Heart left ventricle (tissue), 16 donors: ENCODE measurements at regions of chr5 and their contacts with region 1.

Region 1: DNA sequence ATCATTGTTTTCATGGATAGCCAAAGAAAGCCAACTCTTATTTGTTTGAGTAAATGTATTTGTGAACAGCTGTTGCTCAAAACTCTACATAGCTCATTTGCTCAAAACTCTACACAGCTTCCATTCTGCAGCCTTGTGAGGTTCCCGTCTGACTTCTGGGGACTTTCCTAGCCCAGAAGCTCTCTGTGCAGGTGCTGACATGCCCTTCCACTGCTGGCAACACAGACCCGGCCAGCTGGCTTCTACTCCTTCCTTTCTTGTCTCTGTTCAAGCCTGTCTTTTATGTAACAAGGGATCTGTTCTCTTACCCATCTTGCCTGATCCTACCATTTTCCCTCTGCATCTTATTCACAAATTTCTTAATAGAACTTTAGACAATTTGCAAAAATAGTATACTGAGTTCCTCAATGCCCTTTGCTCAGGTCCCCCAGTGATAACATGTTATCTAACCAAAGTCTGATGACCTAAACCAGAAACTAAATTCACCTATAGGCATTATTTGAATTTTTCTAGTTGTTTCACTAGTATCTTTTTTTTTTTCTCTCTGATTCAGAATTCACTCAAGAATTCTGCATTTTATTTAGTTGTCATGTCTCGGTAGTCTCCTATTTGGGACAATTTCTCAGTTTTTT is 556.5 kb upstream of the SEMA6A start:
- DNase-seq: no peak
- ATAC-seq: no peak
- H3K4me3 ChIP-seq: no peak overlapping the region
- H3K27ac ChIP-seq: no peak overlapping the region
- H3K4me1 ChIP-seq: peaks cover 0 to 16% (median 0%) of the 10 kb centered on the region in 12 donors
- H3K27me3 ChIP-seq: no peaks in the 10 kb centered on the region
- CTCF ChIP-seq: no peak
- POLR2A ChIP-seq: no peak

Region 2: DNA sequence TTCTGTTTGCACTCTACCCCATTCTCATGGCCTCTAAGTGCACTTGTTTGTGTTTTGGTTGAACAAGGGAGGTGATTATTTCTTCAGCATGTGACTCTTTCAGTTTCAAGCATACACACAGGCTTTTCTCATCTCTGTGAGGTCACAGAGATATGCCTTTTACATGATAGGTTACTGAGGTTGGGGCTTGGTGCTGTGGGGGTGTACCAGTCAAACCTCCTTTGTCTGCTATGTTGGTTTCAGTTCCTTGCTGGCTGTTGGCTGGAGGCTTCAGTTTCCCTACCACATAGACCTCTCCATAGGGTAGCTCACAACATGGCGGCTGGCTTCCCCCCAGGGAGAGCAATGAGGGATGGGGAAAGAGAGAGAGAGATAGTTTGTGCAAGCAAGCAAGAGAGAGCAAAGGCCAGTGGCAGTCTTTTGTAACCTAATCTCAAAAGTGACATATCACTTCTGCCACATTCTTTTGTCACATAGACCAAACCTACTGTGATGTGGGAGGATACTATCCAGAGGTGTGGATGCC is 459.9 kb before region 1 on chr5:
- intact Hi-C with region 1: loop called in 1 of 10 experiments (anchors 10 kb)
- DNase-seq: no peak
- ATAC-seq: no peak
- H3K4me3 ChIP-seq: no peak overlapping the region
- H3K27ac ChIP-seq: no peak overlapping the region
- H3K4me1 ChIP-seq: peaks cover 0 to 10% (median 6%) of the 10 kb centered on the region in 12 donors
- H3K27me3 ChIP-seq: no peaks in the 10 kb centered on the region
- CTCF ChIP-seq: no peak
- POLR2A ChIP-seq: no peak

Region 3: GRCh38 chr5:117077142-117077541 is 54.0 kb before region 1 on chr5:
- intact Hi-C with region 1: no loop called
- DNase-seq: no peak
- ATAC-seq: no peak
- H3K4me3 ChIP-seq: no peak overlapping the region
- H3K27ac ChIP-seq: no peak overlapping the region
- H3K4me1 ChIP-seq: no peaks in the 10 kb centered on the region
- H3K27me3 ChIP-seq: no peaks in the 10 kb centered on the region
- CTCF ChIP-seq: peak in 11 of 12 donors; percentile 4 to 49 (median 30)
- POLR2A ChIP-seq: no peak

Region 4: DNA sequence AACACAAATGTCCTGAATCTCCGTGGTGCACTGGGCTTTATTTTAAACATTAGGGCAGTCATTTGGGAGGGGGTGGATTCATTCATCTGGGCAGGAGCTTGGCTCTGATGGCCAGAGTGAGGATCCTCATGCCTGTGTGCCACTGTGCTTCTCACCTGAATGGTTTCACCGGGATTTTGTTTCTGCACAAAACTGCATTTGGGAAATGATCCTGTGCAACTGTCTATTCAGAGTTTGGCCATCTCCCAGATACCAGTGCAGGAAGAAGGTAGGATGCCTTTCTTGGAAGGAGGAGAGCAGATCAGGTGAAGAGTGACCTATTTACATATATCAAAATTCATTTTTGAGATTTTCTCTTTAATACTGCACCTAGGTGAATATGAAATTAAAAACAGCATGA is 42.2 kb before region 1 on chr5:
- intact Hi-C with region 1: loop called in 1 of 10 experiments (anchors 5 kb)
- DNase-seq: no peak
- ATAC-seq: no peak
- H3K4me3 ChIP-seq: no peak overlapping the region
- H3K27ac ChIP-seq: no peak overlapping the region
- H3K4me1 ChIP-seq: peaks cover 0 to 3% (median 0%) of the 10 kb centered on the region in 12 donors
- H3K27me3 ChIP-seq: no peaks in the 10 kb centered on the region
- CTCF ChIP-seq: no peak
- POLR2A ChIP-seq: no peak